K562 (cell line): ENCODE measurements at regions of chr6 and their contacts with region 1.

Region 1: GRCh38 chr6:138115877-138116660 is 8.8 kb upstream of the PERP start:
- DNase-seq: peak; percentile 69 to 75 (median 73)
- ATAC-seq: peak; percentile 97
- H3K4me3 ChIP-seq: no peak overlapping the region
- H3K27ac ChIP-seq: no peak overlapping the region
- H3K4me1 ChIP-seq: no peaks in the 10 kb centered on the region
- H3K27me3 ChIP-seq: peaks cover 2 to 3% of the 10 kb centered on the region in 2 experiments; a peak in 1 of 5 replicates
- CTCF ChIP-seq: peak; percentile 72 to 93 (median 80)
- EP300 ChIP-seq: no peak
- POLR2A ChIP-seq: no peak
- RAD21 ChIP-seq: peak; percentile 94 to 96

Region 2: GRCh38 chr6:138287144-138287955 is 171.3 kb after region 1 on chr6:
- CTCF ChIA-PET with region 1: interaction called, 4 read pairs
- POLR2A ChIA-PET with region 1: no interaction called
- in situ Hi-C with region 1: no loop called
- intact Hi-C with region 1: loop called (anchors 2 kb)
- DNase-seq: peak; percentile 49 to 60 (median 53)
- ATAC-seq: peak; percentile 80
- H3K4me3 ChIP-seq: no peak overlapping the region
- H3K27ac ChIP-seq: no peak overlapping the region
- H3K4me1 ChIP-seq: no peaks in the 10 kb centered on the region
- H3K27me3 ChIP-seq: peaks cover 27 to 46% of the 10 kb centered on the region in 2 experiments
- CTCF ChIP-seq: peak; percentile 56 to 82 (median 61)
- EP300 ChIP-seq: no peak
- POLR2A ChIP-seq: no peak
- RAD21 ChIP-seq: peak; percentile 29 to 37; a peak in 1 of 4 replicates

Region 3: GRCh38 chr6:138509371-138509770 is 393.3 kb after region 1 on chr6:
- CTCF ChIA-PET with region 1: interaction called, 10 read pairs
- POLR2A ChIA-PET with region 1: no interaction called
- in situ Hi-C with region 1: no loop called
- intact Hi-C with region 1: loop called (anchors 1 kb)
- DNase-seq: peak; percentile 16 to 44 (median 24)
- ATAC-seq: peak; percentile 58; the same call in 1 of the 3 replicates
- H3K4me3 ChIP-seq: no peak overlapping the region
- H3K27ac ChIP-seq: no peak overlapping the region
- H3K4me1 ChIP-seq: no peaks in the 10 kb centered on the region
- H3K27me3 ChIP-seq: peaks cover 0 to 6% of the 10 kb centered on the region in 2 experiments; a peak in 2 of 5 replicates
- CTCF ChIP-seq: peak; percentile 45 to 65 (median 62)
- EP300 ChIP-seq: no peak
- POLR2A ChIP-seq: no peak
- RAD21 ChIP-seq: peak; percentile 42 to 65

Region 4: DNA sequence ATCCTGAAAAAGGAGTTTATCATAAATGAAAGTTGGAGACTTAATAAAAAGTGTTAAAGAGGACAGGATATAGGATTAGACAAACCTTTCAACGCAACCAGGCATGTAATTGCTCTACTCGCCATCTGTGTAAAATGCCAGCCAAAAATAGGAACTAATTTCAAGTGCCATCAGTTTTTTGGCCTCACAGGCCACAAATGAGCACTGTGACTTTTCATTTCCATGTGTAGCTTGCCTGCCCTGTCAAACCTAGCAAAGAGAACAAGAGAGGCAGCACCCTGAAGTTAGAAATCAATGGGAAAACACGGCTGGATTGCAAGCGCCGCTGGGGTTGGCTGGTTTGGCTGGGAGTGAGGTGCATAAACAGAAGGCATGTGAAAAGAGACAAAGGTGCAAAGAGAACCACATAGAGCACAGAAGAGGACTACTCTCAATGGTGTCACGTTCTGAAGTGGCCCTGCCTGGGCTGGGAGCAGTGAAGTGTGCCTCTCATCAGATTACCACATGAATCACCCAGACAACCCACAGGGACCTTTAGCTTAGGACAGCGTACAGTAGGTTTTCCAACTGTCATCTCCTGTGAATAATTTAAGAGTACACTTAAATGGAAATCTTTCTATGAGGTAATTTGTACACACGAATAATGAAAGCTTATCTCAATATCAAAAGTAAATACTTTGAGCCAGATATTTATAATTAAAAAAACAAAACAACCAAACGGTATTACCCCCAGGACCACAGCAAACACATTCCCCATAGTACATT is 461.3 kb after region 1 on chr6:
- CTCF ChIA-PET with region 1: no interaction called
- POLR2A ChIA-PET with region 1: interaction called, 4 read pairs
- in situ Hi-C with region 1: loop called (anchors 5 kb)
- intact Hi-C with region 1: no loop called
- DNase-seq: no peak
- ATAC-seq: no peak; the same call in 2 of the 3 replicates
- H3K4me3 ChIP-seq: no peak overlapping the region
- H3K27ac ChIP-seq: no peak overlapping the region
- H3K4me1 ChIP-seq: no peaks in the 10 kb centered on the region
- H3K27me3 ChIP-seq: peaks cover 39 to 49% of the 10 kb centered on the region in 2 experiments
- CTCF ChIP-seq: no peak
- EP300 ChIP-seq: no peak
- POLR2A ChIP-seq: no peak
- RAD21 ChIP-seq: no peak

Region 5: DNA sequence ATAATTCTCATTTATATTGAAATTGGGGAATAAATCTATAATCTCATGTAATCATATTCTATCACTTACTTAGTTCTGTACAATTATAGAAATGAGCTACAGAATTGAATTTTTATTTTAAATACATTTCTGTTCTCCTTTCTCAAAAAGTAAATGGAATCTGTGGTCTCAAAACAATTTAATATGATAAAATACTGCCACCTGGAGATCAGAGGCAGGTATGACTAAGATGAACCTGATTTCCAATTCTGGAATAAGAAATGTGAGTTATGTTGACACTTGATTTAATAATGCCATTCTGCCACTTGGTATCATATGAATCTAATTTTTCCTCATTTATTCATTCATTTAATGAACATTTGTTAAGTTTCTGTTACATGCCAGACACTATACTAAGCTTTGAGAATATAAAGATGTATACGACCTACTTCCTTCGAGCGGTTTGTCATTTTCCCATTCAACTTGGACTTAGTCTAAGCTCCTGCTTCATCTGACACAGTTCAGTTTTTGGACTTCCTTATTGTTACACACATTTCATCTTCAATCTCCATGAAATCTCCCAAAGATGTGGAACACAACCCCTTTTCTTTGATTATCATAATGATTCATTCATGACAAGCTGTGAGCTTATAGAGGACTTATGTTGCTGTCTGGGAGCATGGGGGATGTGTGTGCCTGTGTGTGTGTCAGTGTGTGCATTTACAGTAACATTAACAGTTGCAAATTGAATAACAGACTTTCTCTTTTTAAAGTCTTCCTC is 650.0 kb after region 1 on chr6:
- CTCF ChIA-PET with region 1: interaction called, 6 read pairs
- POLR2A ChIA-PET with region 1: no interaction called
- in situ Hi-C with region 1: loop called (anchors 10 kb)
- intact Hi-C with region 1: loop called (anchors 5 kb)
- DNase-seq: peak; percentile 30 to 63 (median 55)
- ATAC-seq: peak; percentile 57; the same call in 1 of the 3 replicates
- H3K4me3 ChIP-seq: no peak overlapping the region
- H3K27ac ChIP-seq: no peak overlapping the region
- H3K4me1 ChIP-seq: no peaks in the 10 kb centered on the region; a peak in 1 of 5 replicates
- H3K27me3 ChIP-seq: peaks cover 0 to 7% of the 10 kb centered on the region in 2 experiments; a peak in 2 of 5 replicates
- CTCF ChIP-seq: peak in 2 of 3 experiments; percentile 49 to 78; a peak in 4 of 6 replicates
- EP300 ChIP-seq: no peak
- POLR2A ChIP-seq: no peak
- RAD21 ChIP-seq: peak; percentile 74 to 82

Region 6: DNA sequence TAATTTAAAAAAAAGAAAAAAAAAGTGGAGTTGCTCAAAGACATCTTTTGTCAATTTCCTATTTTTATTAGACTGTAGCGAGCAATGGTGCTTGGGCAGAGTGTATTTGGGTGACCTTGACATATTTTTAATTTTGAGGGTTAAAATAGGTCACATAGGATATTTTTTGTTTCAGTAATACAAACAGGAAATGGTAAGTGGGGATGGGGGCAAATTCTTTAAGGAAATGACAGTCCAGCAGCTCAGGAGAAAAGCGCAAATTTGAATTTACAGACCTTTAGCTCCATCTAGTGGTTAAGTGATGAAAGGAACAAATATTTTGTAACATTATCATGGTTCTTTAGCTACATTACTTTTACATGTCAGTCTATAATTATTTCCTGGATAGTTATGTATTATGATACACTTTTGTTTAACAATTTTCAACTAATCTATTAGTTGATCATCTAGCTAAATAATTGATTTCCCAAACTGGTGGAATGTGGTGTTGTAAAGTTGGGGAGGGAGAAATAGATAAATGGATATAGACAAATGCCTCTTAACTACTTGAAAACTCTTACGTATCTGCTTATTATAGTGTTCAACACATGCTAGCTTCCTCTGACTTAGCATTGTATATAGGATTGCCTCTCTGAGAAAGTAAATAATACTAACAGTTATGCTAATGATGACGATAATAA is 1248.4 kb after region 1 on chr6:
- CTCF ChIA-PET with region 1: interaction called, 7 read pairs
- POLR2A ChIA-PET with region 1: interaction called, 4 read pairs
- in situ Hi-C with region 1: loop called (anchors 10 kb)
- intact Hi-C with region 1: loop called (anchors 2 kb)
- DNase-seq: peak; percentile 56 to 69 (median 65)
- ATAC-seq: peak; percentile 68
- H3K4me3 ChIP-seq: no peak overlapping the region
- H3K27ac ChIP-seq: no peak overlapping the region
- H3K4me1 ChIP-seq: peaks cover 0 to 13% of the 10 kb centered on the region in 2 experiments; a peak in 3 of 5 replicates
- H3K27me3 ChIP-seq: 0 out of 5 replicates have a peak, but pooled peaks cover 0 to 6% of the 10 kb centered on the region in 2 experiments
- CTCF ChIP-seq: peak; percentile 52 to 88 (median 54); a peak in 5 of 6 replicates
- EP300 ChIP-seq: no peak
- POLR2A ChIP-seq: no peak
- RAD21 ChIP-seq: peak; percentile 98